Head of caudate nucleus (tissue), 42 donors: ENCODE measurements at regions of chr20 and their contacts with region 1.

Region 1: GRCh38 chr20:40966103-40966502 is 62.5 kb upstream of the TOP1 start:
- DNase-seq: peak in 3 of 42 donors; percentile 18 to 29 (median 20)

Region 2: GRCh38 chr20:40821429-40821828 is 144.7 kb before region 1 on chr20:
- intact Hi-C with region 1: no loop called
- DNase-seq: no peak

Region 3: GRCh38 chr20:41094353-41095055 is 128.4 kb after region 1 on chr20:
- intact Hi-C with region 1: loop called (anchors 5 kb)
- DNase-seq: peak in 7 of 42 donors; percentile 10 to 42 (median 25)